WTC11 (cell line): ENCODE measurements at regions of chr6 and their contacts with region 1.

Region 1: DNA sequence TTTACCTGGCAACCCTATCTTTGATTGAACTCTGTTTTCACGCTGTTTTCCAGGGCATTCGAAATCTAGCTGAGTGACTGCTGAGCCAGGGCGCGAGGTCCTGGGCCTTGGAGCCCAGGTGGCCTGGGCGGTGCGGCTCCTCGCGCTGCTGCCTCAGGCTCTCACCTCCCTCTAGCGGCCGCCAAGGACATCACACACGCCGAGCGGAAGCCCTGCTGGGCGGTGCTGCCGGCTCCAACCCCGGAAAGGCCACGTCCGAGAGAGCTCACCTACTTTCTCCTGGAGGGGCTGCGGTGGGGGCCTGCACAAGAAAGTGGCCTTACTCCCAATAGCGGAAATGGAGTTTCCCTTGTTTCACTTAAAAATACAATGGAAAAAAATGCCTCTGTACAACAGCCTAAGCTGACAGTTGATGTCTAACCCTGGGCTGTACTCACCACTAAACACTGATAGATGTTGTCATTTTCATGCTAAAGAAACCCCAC is 77.7 kb downstream of the ELOVL4 start:
- DNase-seq: peak; percentile 87
- ATAC-seq: peak; percentile 95
- H3K4me3 Mint-ChIP-seq: peak overlapping the region; percentile 28; the same call in 1 of the 2 replicates
- H3K27ac Mint-ChIP-seq: no peak overlapping the region
- H3K4me1 Mint-ChIP-seq: peaks cover 25% of the 10 kb centered on the region
- H3K27me3 Mint-ChIP-seq: no peaks in the 10 kb centered on the region; the same call in 1 of the 2 replicates
- CTCF ChIP-seq: peak; percentile 91

Region 2: DNA sequence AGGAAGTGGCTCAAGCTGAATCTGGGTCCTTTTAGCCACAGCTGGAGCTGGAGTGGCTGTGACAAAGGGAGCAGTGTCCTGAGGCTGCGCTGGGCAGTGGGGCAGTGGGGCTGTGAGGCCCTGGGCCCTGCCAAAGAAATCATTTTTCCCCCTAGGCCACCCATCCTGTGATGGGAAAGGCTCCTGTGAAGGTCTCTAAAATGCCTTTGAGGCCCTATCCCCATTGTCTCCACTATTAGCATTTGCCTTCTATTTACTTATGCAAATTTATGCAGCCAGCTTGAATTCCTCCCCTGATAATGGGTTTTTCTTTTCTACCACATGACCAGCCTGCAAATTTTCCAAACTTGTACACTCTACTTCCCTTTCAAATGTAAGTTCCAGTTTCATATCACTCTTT is 1677.6 kb before region 1 on chr6:
- CTCF ChIA-PET with region 1: no interaction called
- POLR2A ChIA-PET with region 1: no interaction called
- DNase-seq: peak; percentile 18
- ATAC-seq: peak; percentile 92
- H3K4me3 Mint-ChIP-seq: no peak overlapping the region
- H3K27ac Mint-ChIP-seq: no peak overlapping the region
- H3K4me1 Mint-ChIP-seq: peaks cover 9% of the 10 kb centered on the region
- H3K27me3 Mint-ChIP-seq: peaks cover 97% of the 10 kb centered on the region
- CTCF ChIP-seq: no peak

Region 3: GRCh38 chr6:79750806-79751205 is 118.8 kb before region 1 on chr6:
- CTCF ChIA-PET with region 1: interaction called, 12 read pairs
- POLR2A ChIA-PET with region 1: no interaction called
- DNase-seq: peak; percentile 12
- ATAC-seq: peak; percentile 83
- H3K4me3 Mint-ChIP-seq: no peak overlapping the region
- H3K27ac Mint-ChIP-seq: no peak overlapping the region
- H3K4me1 Mint-ChIP-seq: peaks cover 12% of the 10 kb centered on the region
- H3K27me3 Mint-ChIP-seq: peaks cover 4% of the 10 kb centered on the region; the same call in 1 of the 2 replicates
- CTCF ChIP-seq: no peak

Region 4: GRCh38 chr6:79777713-79778579 is 91.7 kb before region 1 on chr6:
- CTCF ChIA-PET with region 1: interaction called, 59 read pairs
- POLR2A ChIA-PET with region 1: no interaction called
- DNase-seq: peak; percentile 92
- ATAC-seq: peak; percentile 96
- H3K4me3 Mint-ChIP-seq: peak overlapping the region; percentile 57
- H3K27ac Mint-ChIP-seq: no peak overlapping the region
- H3K4me1 Mint-ChIP-seq: peaks cover 7% of the 10 kb centered on the region
- H3K27me3 Mint-ChIP-seq: peaks cover 4% of the 10 kb centered on the region
- CTCF ChIP-seq: peak; percentile 97

Region 5: GRCh38 chr6:79810185-79810705 is 59.4 kb before region 1 on chr6:
- CTCF ChIA-PET with region 1: interaction called, 19 read pairs
- POLR2A ChIA-PET with region 1: no interaction called
- DNase-seq: no peak
- ATAC-seq: peak; percentile 55
- H3K4me3 Mint-ChIP-seq: no peak overlapping the region
- H3K27ac Mint-ChIP-seq: no peak overlapping the region
- H3K4me1 Mint-ChIP-seq: peaks cover 31% of the 10 kb centered on the region
- H3K27me3 Mint-ChIP-seq: peaks cover 6% of the 10 kb centered on the region; the same call in 1 of the 2 replicates
- CTCF ChIP-seq: no peak